ENCODE measurements at regions of chr9 and their contacts with region 1.

Region 1: GRCh38 chr9:81689343-81690190 is at the start of gene TLE1:
- DNase-seq: peak; percentile 99 to 100
- ATAC-seq: peak; percentile 71 to 77
- H3K4me3 ChIP-seq: peak within 1 kb of the TSS; percentile 74 to 92 (median 86)
- H3K27ac ChIP-seq: peak within 1 kb of the TSS; percentile 94 to 98 (median 96)
- H3K4me1 ChIP-seq: peaks cover 23 to 28% of the 10 kb centered on the region in 2 donors
- H3K27me3 ChIP-seq: no peaks in the 10 kb centered on the region
- CTCF ChIP-seq: no peak
- POLR2A ChIP-seq: peak; percentile 97 to 98
- total RNA-seq, gene TLE1: 32.0 to 159 (median 55.4) TPM

Region 2: GRCh38 chr9:80061940-80062339 is 1627.6 kb before region 1 on chr9:
- in situ Hi-C with region 1: no loop called
- intact Hi-C with region 1: loop called (anchors 10 kb)
- DNase-seq: peak; percentile 67 to 83
- ATAC-seq: peak; percentile 97
- H3K4me3 ChIP-seq: no peak overlapping the region
- H3K27ac ChIP-seq: peak overlapping the region; percentile 86 to 91 (median 90)
- H3K4me1 ChIP-seq: peaks cover 25 to 27% of the 10 kb centered on the region in 2 donors
- H3K27me3 ChIP-seq: no peaks in the 10 kb centered on the region
- CTCF ChIP-seq: no peak
- POLR2A ChIP-seq: peak in 1 of 2 donors; percentile 36

Region 3: GRCh38 chr9:81416451-81417298 is 272.9 kb before region 1 on chr9:
- in situ Hi-C with region 1: no loop called
- intact Hi-C with region 1: loop called (anchors 1 kb)
- DNase-seq: peak; percentile 50 to 79
- ATAC-seq: peak; percentile 95 to 99
- H3K4me3 ChIP-seq: no peak overlapping the region
- H3K27ac ChIP-seq: peak overlapping the region; percentile 59 to 79 (median 70)
- H3K4me1 ChIP-seq: peaks cover 18 to 32% of the 10 kb centered on the region in 2 donors
- H3K27me3 ChIP-seq: no peaks in the 10 kb centered on the region
- CTCF ChIP-seq: no peak
- POLR2A ChIP-seq: no peak

Region 4: GRCh38 chr9:81558091-81558830 is 131.3 kb before region 1 on chr9:
- in situ Hi-C with region 1: no loop called
- intact Hi-C with region 1: loop called (anchors 2 kb)
- DNase-seq: no peak
- ATAC-seq: peak in 1 of 2 donors; percentile 11
- H3K4me3 ChIP-seq: no peak overlapping the region
- H3K27ac ChIP-seq: peak overlapping the region; percentile 34 to 53 (median 44)
- H3K4me1 ChIP-seq: peaks cover 8 to 27% of the 10 kb centered on the region in 2 donors
- H3K27me3 ChIP-seq: no peaks in the 10 kb centered on the region
- CTCF ChIP-seq: no peak
- POLR2A ChIP-seq: no peak

Region 5: DNA sequence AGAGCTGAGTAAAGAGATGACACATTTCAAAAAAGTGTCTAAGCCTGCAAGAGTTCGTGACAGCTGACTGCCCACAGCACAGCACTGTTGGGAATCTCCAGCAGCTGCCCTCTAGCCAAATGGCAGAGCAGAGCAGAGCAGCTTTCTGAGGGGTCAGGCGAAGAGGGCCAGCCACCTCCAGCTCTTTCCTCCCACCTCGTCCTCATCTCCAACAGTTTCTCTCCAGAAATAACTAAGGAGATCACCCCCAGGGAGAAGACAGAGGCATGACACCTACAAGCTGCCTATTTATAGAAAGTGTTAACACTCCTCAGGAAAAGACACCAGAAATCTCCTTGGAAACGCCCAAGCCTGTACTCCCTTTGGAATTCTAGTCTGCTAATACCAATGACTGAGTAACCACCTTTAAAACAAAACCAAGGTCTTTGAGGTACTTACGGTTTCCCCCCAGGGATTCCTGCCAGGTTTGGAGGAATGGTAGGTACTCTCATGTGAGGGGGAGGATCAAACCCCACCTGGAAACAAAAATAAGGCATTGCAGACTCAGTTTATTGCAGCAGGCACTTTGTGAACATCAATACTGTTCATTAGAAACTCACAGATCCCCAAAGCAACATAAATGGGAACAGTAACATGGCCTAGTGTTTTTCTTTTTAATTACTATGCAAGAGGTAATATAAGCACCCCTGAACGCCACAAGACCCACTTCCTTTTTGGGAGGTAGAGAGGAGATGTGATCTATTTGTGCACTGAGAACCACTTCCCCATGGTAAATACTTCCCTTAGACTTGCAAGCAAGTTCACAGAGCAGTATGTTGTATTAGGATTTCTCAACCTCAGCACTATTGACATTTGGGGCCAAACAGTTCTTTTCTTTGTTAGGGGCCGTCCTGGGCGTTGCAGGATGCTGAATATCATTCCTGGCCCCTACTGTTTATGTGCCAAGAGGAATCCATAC is 79.5 kb before region 1 on chr9:
- in situ Hi-C with region 1: no loop called
- intact Hi-C with region 1: loop called (anchors 5 kb)
- DNase-seq: peak in 1 of 2 donors; percentile 57
- ATAC-seq: peak; percentile 48 to 59
- H3K4me3 ChIP-seq: no peak overlapping the region
- H3K27ac ChIP-seq: peak overlapping the region; percentile 79 to 90 (median 86)
- H3K4me1 ChIP-seq: peaks cover 37 to 51% of the 10 kb centered on the region in 2 donors
- H3K27me3 ChIP-seq: no peaks in the 10 kb centered on the region
- CTCF ChIP-seq: peak in 1 of 5 experiments; percentile 15
- POLR2A ChIP-seq: no peak

Region 6: DNA sequence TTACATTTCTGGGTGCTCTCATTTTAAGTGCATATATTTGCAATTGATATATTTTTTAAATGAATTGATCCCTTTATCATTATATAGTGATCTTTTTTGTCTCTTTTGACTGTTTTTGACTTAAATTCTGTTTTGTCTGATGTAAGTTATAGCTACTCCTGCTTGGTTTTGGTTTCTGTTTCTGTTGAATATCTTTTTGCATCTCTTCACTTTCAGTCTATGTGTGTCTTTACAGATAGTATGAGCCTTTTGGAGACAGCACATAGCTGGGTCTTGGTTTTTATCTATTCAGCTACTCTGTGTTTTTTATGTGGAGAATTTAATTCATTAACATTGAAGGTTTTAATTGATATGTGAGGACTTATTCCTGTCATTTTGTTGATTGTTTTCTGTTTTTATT is 610.3 kb after region 1 on chr9:
- in situ Hi-C with region 1: no loop called
- intact Hi-C with region 1: loop called (anchors 10 kb)
- DNase-seq: no peak
- ATAC-seq: no peak
- H3K4me3 ChIP-seq: no peak overlapping the region
- H3K27ac ChIP-seq: no peak overlapping the region
- H3K4me1 ChIP-seq: peaks cover 9 to 10% of the 10 kb centered on the region in 2 donors
- H3K27me3 ChIP-seq: no peaks in the 10 kb centered on the region
- CTCF ChIP-seq: no peak
- POLR2A ChIP-seq: no peak